ENCODE measurements at regions of chrX and their contacts with region 1.

Region 1: DNA sequence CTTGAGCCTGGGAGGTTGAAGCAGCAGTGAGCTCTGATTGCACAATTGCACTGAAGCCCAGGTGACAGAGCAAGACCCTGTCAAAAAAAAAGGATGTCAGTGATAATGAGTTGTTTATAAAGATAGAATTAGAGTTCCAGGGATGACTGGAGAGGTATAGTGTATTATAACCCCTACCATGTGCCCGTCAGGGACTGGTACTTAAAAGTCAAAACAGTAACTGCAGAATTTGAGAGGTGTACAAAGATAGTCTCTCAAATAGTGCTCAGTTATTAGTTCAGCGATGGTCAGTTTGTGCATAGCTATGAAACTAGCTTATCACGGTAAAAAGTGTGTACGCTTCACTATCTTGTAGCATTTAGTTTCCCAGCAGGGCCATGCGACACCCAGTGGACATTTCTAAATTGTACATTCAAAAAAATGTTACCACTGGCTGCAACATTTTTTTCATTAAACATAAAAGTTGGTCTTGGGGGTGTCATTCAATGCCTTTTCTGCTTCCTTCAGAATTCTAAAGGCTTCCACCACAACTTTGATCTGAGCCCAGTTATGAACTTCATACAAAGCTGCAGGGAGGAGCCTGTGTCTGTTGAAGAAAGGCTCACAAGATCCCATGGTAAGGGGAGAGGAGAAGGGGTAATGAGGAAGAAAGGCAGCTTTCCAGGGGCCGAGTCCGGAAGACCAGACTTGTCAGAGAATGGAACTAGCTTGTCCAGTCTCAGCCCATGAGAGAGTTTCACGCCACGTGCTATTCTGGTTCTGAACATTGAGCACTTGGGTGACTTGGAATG is 9.2 kb upstream of the GYG2 start:
- DNase-seq: no peak

Region 2: GRCh38 chrX:2643880-2644279 is 175.7 kb before region 1 on chrX:
- intact Hi-C with region 1: loop called (anchors 2 kb)
- DNase-seq: no peak

Region 3: DNA sequence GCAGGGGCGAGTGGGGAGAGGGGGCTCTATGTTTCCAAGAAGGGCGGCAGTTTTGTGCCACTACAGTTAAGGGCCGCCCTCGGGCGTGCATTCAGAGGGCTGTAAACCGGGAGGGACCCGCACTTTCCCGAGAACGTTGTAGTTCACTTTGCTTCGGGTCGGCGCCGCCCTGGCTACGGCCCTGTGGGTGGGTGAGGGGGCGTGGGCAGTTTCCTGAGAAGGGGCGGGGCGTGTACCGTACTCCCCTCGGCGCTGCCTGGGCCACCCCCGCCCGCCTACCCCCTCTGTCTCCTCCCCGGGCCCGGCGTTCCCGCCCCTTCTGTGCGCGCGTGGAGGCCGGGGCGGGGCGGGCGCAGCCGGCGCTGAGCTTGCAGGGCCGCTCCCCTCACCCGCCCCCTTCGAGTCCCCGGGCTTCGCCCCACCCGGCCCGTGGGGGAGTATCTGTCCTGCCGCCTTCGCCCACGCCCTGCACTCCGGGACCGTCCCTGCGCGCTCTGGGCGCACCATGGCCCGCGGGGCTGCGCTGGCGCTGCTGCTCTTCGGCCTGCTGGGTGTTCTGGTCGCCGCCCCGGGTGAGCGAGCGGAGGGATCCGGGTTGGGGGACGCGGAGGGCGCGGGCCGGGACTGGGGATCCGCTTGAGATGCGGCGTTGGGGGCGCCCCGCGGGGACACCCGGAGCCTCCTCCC is 128.5 kb before region 1 on chrX and contains the start of gene CD99:
- intact Hi-C with region 1: loop called (anchors 10 kb)
- DNase-seq: peak; percentile 93
- total RNA-seq, gene CD99: 327 TPM